ENCODE measurements at regions of chr12 and their contacts with region 1.

Region 1: GRCh38 chr12:1594261-1595025 is at the start of gene FBXL14:
- DNase-seq: peak; percentile 96
- H3K4me3 ChIP-seq: peak within 1 kb of the TSS; percentile 80
- H3K27ac ChIP-seq: peak within 1 kb of the TSS; percentile 88
- H3K4me1 ChIP-seq: peaks cover 27% of the 10 kb centered on the region
- H3K27me3 ChIP-seq: no peaks in the 10 kb centered on the region
- CTCF ChIP-seq: no peak
- total RNA-seq, gene FBXL14: 19.3 and 21.2 TPM in 2 replicates

Region 2: DNA sequence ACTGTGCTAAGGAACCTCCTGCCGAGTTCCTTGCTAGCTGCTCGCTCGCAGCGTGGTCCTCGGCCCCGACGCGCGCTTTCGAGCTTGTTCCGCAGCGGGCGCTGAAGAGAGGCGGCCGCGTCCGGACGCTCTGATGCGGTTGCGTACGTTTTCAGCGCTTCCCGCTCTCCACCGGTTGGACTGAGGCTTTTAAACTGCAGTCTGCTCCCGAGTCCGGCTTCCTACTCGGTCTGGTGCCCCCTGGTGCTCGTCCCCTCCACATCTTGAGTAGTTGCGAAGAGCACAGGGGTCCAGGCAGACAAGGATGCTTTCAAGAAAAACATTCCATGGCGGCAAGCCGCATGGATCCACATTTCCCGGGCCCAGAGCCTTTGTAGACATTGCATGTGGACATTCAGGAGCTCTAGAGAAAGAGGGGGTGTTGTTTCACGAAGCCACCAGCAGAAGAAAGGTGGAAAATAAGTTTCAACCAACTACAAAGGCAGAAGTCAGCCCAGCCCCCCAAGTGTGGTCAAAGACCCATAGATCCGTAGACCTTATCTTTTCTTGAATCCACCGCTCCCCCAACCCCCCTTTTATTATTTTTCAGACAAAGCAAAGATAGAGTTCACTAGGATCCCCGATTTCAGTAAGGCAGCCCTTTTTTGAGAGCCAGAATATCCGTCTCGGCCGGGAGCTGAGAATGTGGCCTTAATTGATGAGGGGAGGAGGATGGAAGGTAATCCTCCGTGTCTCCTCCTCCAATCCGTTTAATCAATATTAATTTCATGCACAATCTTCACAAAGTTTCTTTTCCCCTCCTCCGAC is 843.0 kb before region 1 on chr12:
- CTCF ChIA-PET with region 1: no interaction called
- POLR2A ChIA-PET with region 1: no interaction called
- intact Hi-C with region 1: loop called (anchors 10 kb)
- DNase-seq: peak; percentile 98
- H3K4me3 ChIP-seq: peak overlapping the region; percentile 92
- H3K27ac ChIP-seq: peak overlapping the region; percentile 73
- H3K4me1 ChIP-seq: peaks cover 19% of the 10 kb centered on the region
- H3K27me3 ChIP-seq: no peaks in the 10 kb centered on the region
- CTCF ChIP-seq: peak; percentile 80

Region 3: DNA sequence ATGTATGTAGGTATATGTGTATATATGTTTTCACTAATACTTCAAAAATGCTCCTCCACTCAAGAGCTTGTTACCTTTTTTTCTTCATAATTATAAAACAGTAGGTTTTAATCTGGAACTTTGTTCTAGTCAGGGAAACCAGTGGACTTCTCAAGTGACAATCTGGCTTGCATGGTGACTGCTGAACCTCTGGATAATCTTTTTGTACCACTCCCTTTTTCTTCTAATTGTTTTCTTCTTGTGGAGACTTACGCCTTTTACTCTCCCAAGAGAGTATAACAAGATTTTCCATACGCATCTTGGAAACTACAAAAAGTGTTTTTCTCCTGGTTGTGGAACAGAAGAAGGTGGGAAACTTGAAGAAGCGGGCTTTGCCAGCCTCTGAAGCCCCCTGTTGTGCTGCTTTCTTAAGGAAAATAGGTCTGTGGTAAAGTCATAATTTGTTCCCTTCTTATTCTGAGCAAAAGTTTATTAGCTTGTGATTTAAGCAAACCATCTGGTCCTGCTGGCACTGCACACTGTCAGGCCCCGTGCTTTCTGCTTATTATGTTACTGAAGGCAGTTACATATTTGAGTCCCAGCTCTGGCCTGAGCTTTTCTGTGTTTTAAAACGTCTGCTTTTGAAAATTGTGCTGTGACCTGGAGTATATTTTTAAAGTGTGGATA is 311.6 kb before region 1 on chr12:
- CTCF ChIA-PET with region 1: no interaction called
- POLR2A ChIA-PET with region 1: no interaction called
- intact Hi-C with region 1: loop called (anchors 5 kb)
- DNase-seq: peak; percentile 80
- H3K4me3 ChIP-seq: no peak overlapping the region
- H3K27ac ChIP-seq: peak overlapping the region; percentile 24
- H3K4me1 ChIP-seq: peaks cover 27% of the 10 kb centered on the region
- H3K27me3 ChIP-seq: no peaks in the 10 kb centered on the region
- CTCF ChIP-seq: no peak

Region 4: GRCh38 chr12:1533602-1534304 is 60.7 kb before region 1 on chr12:
- CTCF ChIA-PET with region 1: interaction called, 12 read pairs
- POLR2A ChIA-PET with region 1: no interaction called
- intact Hi-C with region 1: no loop called
- DNase-seq: peak; percentile 41
- H3K4me3 ChIP-seq: peak overlapping the region; percentile 14
- H3K27ac ChIP-seq: no peak overlapping the region
- H3K4me1 ChIP-seq: peaks cover 10% of the 10 kb centered on the region
- H3K27me3 ChIP-seq: peaks cover 34% of the 10 kb centered on the region
- CTCF ChIP-seq: no peak

Measured in A673 (cell line).